Activated CD4-positive, alpha-beta T cell treated with anti-CD3 and anti-CD28 coated beads for 36 hours (primary cell): ENCODE measurements at regions of chr1 and their contacts with region 1.

Region 1: DNA sequence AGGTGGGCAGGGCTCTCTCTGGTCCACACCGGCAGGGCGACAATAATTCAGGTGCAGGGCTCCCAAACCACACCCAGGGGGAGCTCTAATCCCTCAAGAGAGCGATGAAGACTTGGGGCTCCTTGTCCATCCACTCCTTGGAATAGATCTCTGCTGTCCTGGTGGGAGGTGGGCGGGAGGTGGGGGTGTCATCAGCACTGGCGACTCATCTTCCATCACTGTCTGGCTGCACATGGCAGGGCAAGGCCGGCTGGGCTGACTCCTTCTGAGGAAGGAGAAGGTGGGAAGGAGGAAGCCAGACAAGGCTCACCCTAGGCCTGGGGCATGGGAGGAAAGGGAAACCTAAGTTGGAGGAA is 29.3 kb downstream of the TNNT2 start:
- DNase-seq: peak; percentile 61
- ATAC-seq: peak; percentile 76
- H3K4me3 Mint-ChIP-seq: no peak overlapping the region
- H3K27ac Mint-ChIP-seq: no peak overlapping the region
- H3K4me1 Mint-ChIP-seq: no peaks in the 10 kb centered on the region
- H3K27me3 Mint-ChIP-seq: peaks cover 23% of the 10 kb centered on the region

Region 2: DNA sequence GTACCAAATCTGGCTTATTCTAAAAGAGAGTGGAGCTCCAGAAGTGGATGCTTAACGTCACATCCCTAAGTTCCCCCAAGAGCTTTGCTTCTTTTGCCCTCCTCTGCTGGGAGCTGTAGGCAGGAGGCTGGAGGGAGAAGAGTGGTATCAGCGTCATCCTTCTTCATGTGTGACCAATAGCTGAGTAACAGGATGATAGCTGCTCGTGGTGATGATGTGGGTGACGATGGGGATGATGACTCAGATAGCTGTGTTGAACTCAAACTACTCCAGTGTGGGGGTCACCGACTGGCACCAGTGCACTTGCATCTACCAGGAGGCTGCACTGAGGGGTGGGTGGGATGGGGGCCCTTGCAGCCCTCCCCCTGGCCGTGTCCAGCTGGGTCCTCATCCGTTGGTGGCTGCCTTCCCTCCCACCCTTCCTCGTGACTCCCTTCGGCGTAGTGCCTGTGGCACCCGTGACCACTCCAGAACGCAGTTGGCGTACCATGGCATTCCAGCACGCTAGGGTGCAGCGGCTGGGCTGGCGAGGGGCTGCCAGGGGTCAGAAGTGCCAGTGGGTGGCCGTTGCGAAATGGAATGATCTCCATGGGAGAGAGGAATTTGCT is 156.4 kb before region 1 on chr1:
- CTCF ChIA-PET with region 1: no interaction called
- POLR2A ChIA-PET with region 1: no interaction called
- intact Hi-C with region 1: no loop called
- DNase-seq: peak; percentile 81
- ATAC-seq: peak; percentile 100
- H3K4me3 Mint-ChIP-seq: no peak overlapping the region
- H3K27ac Mint-ChIP-seq: no peak overlapping the region
- H3K4me1 Mint-ChIP-seq: peaks cover 4% of the 10 kb centered on the region
- H3K27me3 Mint-ChIP-seq: peaks cover 13% of the 10 kb centered on the region

Region 3: GRCh38 chr1:201254625-201255506 is 93.3 kb before region 1 on chr1:
- CTCF ChIA-PET with region 1: interaction called, 6 read pairs
- POLR2A ChIA-PET with region 1: no interaction called
- intact Hi-C with region 1: loop called in 1 of 2 experiments (anchors 1 kb)
- DNase-seq: peak; percentile 81
- ATAC-seq: peak; percentile 64
- H3K4me3 Mint-ChIP-seq: no peak overlapping the region
- H3K27ac Mint-ChIP-seq: no peak overlapping the region
- H3K4me1 Mint-ChIP-seq: no peaks in the 10 kb centered on the region
- H3K27me3 Mint-ChIP-seq: peaks cover 4% of the 10 kb centered on the region

Region 4: GRCh38 chr1:201361652-201362504 is 13.7 kb after region 1 on chr1:
- CTCF ChIA-PET with region 1: interaction called, 23 read pairs
- POLR2A ChIA-PET with region 1: no interaction called
- intact Hi-C with region 1: no loop called
- DNase-seq: peak; percentile 62
- ATAC-seq: peak; percentile 73
- H3K4me3 Mint-ChIP-seq: no peak overlapping the region
- H3K27ac Mint-ChIP-seq: no peak overlapping the region
- H3K4me1 Mint-ChIP-seq: no peaks in the 10 kb centered on the region
- H3K27me3 Mint-ChIP-seq: peaks cover 5% of the 10 kb centered on the region

Region 5: DNA sequence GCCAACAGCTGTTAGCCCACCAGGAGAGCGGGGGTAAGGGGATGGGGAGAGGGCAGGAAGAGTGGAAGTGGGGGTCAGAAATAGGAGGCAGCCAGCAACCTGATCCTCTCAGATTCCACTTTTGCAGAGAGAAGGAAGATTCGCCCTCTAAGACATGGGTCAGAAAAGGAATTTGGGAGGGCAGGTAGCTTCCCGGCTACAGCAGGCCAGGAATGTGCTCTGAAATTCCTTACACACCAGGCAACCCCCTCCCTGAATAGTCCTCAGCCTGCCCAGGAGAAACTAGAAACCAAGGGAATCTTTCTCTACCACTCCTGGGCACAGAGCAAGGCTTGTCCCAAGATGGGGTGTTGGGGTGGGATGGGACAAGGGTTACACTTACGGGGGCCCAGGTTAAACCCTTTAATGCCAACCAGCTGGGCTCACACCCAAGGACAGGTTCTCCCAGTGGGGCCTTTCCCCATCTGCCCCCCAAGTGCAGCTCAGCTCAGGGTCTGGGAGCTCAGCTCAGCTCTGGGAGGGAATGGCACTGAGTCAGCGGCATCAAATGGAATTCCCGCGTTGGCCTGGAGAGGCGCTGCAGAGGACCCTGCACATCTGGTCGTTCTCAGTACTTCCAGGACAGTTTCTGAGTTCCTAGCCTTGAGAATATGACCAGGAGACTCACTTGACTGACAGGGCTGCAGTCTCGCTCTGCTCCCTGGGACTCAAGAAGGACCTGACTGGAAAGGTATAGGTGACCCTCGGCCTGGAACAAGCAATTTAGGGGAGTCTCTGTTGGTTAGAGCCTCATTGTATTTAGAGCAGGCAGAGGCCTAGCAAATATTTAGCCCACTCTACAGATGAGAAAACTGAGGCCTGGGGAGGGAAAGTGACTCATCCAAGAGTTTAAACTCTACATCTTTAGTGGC is 28.5 kb after region 1 on chr1:
- CTCF ChIA-PET with region 1: no interaction called
- POLR2A ChIA-PET with region 1: no interaction called
- intact Hi-C with region 1: no loop called
- DNase-seq: peak; percentile 47
- ATAC-seq: peak; percentile 70
- H3K4me3 Mint-ChIP-seq: no peak overlapping the region
- H3K27ac Mint-ChIP-seq: no peak overlapping the region
- H3K4me1 Mint-ChIP-seq: no peaks in the 10 kb centered on the region
- H3K27me3 Mint-ChIP-seq: peaks cover 9% of the 10 kb centered on the region

Region 6: GRCh38 chr1:201408176-201408833 is 60.1 kb after region 1 on chr1:
- CTCF ChIA-PET with region 1: interaction called, 3 read pairs
- POLR2A ChIA-PET with region 1: no interaction called
- intact Hi-C with region 1: loop called in 1 of 2 experiments (anchors 1 kb)
- DNase-seq: peak; percentile 88
- ATAC-seq: peak; percentile 83
- H3K4me3 Mint-ChIP-seq: no peak overlapping the region
- H3K27ac Mint-ChIP-seq: no peak overlapping the region
- H3K4me1 Mint-ChIP-seq: no peaks in the 10 kb centered on the region
- H3K27me3 Mint-ChIP-seq: peaks cover 2% of the 10 kb centered on the region